Cardiac septum (tissue), 1 donor: ENCODE measurements at regions of chr2 and their contacts with region 1.

Region 1: DNA sequence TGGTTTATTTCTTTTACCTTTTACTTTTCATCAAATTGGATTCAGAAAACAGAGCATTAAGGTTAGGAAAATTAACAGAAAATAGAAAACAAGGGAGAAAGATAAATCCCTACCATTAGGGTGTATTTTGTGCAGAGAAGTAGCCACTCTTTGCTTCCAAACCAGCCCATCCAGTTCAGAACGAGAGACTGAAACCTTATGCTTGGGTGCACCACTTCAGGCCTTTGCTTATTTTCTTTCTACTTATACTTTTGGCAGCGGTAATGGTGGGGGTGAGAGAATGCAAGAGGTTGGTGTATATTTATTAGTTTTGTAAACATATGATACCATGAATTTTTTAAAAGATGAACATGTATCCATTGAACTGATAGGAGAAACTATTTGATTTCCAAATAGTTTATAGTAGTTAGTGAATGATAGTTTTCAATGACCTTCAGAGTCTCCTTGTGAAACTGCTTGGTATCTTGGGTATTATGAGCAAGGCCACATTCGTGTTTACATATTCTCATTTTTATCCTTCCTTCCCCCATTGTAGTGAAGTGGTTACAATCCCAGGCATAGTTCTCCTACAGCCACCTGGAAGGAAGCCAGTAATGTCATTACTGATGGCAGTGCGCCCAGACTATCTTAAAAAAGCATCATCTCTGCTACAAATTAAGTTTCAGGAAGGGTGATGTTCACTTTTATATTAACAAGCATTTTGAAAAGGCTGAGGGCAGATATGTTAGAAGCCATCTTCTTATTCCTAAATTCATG is 60.8 kb downstream of the MFSD6 start:
- DNase-seq: peak; percentile 87

Region 2: DNA sequence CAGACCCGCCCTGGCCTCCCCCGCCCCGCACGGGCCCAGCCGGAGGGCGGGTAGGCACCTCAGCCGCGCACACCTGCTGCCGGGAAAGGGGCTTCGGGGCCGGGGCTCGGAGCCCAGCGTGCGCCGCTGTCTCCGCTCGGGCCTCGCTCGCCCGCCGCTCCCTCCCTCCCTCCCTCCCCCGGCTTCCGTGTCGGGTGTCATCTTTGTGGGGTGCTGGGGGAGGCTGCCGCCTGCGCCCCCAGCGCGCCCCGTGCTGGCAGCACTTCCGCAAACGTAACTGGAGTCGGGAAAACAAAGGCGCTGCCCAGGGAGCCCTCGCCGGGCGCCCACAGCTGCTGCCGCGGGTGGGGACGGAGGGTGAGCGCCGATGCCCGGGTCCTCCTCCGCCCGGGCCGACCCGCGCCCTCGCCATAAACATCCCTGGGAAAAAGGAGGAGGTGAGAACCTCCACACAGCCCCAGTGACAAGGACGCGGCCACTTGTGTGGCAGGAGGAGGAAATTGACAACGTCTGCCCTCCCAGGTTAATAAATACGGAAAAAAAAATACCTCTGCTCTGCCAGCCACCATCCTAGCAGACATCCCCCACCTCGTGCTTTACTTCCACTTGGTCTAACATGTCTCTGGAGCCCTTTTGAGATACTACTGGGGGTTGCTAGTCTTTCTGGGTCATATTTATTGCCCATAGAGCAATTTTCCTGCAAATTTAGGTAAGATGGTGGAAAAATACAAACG is 60.3 kb before region 1 on chr2:
- intact Hi-C with region 1: loop called (anchors 2 kb)
- DNase-seq: peak; percentile 82

Region 3: DNA sequence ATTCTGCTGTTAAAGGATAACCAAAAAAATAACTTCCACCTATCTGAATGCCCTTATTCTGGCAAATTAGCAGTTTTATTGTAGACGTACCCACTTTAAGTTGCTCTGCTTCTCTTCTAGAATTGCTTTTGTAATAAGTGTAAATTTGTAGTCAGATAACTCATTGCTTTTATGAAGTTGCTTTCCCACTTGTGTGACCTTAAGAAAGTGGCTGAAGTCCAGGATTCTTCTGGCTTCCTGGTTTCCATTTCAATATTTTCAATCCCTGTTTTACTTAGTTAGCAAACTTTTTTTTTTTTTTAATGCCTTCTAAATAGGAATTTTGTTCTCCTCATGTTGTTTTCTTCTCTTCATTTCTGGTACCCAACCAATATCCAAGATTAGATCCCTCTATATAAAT is 471.5 kb after region 1 on chr2:
- intact Hi-C with region 1: no loop called
- DNase-seq: no peak